GM12878 (cell line): ENCODE measurements at regions of chr1 and their contacts with region 1.

Region 1: DNA sequence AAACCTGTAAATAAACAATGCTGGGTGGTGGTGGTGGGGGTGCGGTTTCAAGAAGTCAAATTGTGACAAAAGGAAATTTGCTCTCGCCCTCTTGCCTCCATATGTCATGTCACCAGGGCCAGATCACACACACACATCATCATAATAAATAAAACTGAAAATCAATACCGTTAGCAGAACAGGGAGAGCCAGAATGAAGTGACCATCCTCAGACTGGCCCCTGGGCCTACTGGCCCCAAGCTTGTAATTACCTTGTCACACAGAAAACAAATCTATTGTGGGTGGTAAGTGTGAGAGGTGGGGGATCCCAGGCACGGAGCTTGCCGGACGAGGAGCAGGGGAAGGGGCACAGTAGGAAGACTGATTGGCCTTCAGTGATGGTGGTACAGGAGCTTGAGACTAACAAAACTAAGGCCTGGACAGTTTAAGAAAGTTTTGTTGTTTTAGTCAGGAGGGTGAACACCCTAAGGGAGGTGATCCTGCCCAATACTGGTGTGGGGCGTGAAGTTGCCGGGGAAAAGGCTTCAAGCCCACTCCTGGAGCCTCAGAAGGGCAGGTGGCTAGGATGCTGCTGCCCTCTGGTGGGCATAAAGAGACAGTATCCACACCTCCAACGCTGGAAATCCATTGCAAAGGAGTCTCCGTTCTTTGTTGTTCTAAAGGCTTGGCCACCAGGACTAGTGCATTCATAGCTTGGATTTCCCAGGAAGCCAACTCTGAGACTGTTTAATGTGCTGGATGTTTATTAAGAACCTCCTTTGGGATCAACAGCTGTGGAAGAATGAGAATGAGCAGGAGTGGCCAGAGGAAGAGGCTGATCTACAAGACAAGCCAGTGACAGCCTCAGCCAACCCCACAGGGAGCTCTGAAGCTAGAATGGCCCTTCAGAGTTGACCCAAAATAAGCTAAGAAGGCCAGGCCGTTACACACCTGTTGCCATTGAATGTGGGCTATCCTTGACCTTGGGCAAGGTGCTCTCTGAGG is 8.1 kb upstream of the C1orf216 start:
- DNase-seq: no peak
- ATAC-seq: peak; percentile 94
- H3K4me3 ChIP-seq: no peak overlapping the region
- H3K27ac ChIP-seq: no peak overlapping the region
- H3K4me1 ChIP-seq: no peaks in the 10 kb centered on the region
- H3K27me3 ChIP-seq: no peaks in the 10 kb centered on the region
- CTCF ChIP-seq: peak; percentile 81 to 85 (median 84)
- EP300 ChIP-seq: no peak
- POLR2A ChIP-seq: no peak
- RAD21 ChIP-seq: peak; percentile 77

Region 2: DNA sequence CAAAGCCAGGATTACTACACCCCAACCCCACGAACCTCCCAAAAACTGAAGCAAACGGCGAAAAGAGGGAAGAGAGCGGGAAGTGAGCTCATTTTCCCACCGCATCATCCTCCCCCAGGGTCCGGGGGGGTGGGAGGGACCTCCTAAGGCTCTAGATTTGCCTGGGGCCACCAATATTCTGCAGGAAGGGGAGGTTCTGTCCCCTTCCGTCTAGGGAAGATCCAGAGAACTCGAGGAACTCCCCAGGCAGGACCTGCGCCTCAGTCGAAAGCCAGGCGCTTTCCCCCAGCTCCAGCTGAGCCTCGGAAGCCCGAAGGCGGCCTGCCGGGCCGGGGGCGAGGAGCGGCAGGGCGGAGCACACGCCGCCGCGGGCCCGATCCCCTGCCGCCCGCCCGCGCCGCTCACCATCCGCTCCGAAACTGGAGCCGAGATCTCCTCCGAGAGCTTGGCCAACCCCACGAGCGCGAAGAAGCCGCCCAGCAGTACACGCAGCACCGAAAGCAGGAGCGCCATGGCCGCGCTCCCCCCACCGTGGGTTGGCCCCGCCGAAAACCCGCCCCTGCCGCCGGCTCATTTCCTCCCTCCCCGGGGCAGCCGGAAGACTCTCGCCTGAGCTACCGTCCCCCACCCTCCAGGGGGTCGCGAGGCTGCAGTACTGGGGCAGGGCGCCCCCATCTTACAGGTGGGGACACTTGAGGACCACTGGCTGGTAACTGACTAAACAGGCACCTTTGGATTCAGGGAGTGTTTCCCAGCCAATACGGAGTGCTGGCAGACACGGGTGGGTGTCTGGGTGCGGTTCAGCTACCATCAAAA is 741.7 kb before region 1 on chr1 and contains the start of gene TMEM35B:
- CTCF ChIA-PET with region 1: no interaction called
- POLR2A ChIA-PET with region 1: no interaction called
- RAD21 ChIA-PET with region 1: no interaction called
- SMC1A ChIA-PET with region 1: no interaction called
- in situ Hi-C with region 1: no loop called
- intact Hi-C with region 1: no loop called
- DNase-seq: no peak
- ATAC-seq: peak; percentile 92
- H3K4me3 ChIP-seq: peak within 1 kb of the TSS; percentile 97
- H3K27ac ChIP-seq: peak within 1 kb of the TSS; percentile 88
- H3K4me1 ChIP-seq: peaks cover 9% of the 10 kb centered on the region
- H3K27me3 ChIP-seq: no peaks in the 10 kb centered on the region
- CTCF ChIP-seq: no peak; a peak in 1 of 6 replicates
- EP300 ChIP-seq: 0 out of 4 replicates have a peak, but pooled peaks of 1 of the 2 experiments have one; percentile 22
- POLR2A ChIP-seq: peak; percentile 97
- RAD21 ChIP-seq: no peak
- polyA plus RNA-seq, gene TMEM35B: 118 to 138 TPM

Region 3: GRCh38 chr1:35398739-35399138 is 328.0 kb before region 1 on chr1:
- CTCF ChIA-PET with region 1: no interaction called
- POLR2A ChIA-PET with region 1: no interaction called
- RAD21 ChIA-PET with region 1: no interaction called
- SMC1A ChIA-PET with region 1: no interaction called
- in situ Hi-C with region 1: no loop called
- intact Hi-C with region 1: no loop called
- DNase-seq: no peak
- ATAC-seq: no peak
- H3K4me3 ChIP-seq: no peak overlapping the region
- H3K27ac ChIP-seq: no peak overlapping the region
- H3K4me1 ChIP-seq: no peaks in the 10 kb centered on the region
- H3K27me3 ChIP-seq: no peaks in the 10 kb centered on the region
- CTCF ChIP-seq: no peak
- EP300 ChIP-seq: no peak
- POLR2A ChIP-seq: no peak
- RAD21 ChIP-seq: no peak

Region 4: GRCh38 chr1:35519432-35519831 is 207.3 kb before region 1 on chr1:
- CTCF ChIA-PET with region 1: no interaction called
- POLR2A ChIA-PET with region 1: no interaction called
- RAD21 ChIA-PET with region 1: no interaction called
- SMC1A ChIA-PET with region 1: no interaction called
- in situ Hi-C with region 1: no loop called
- intact Hi-C with region 1: no loop called
- DNase-seq: no peak
- ATAC-seq: no peak
- H3K4me3 ChIP-seq: no peak overlapping the region
- H3K27ac ChIP-seq: no peak overlapping the region
- H3K4me1 ChIP-seq: no peaks in the 10 kb centered on the region
- H3K27me3 ChIP-seq: no peaks in the 10 kb centered on the region
- CTCF ChIP-seq: no peak
- EP300 ChIP-seq: no peak
- POLR2A ChIP-seq: no peak
- RAD21 ChIP-seq: no peak

Region 5: GRCh38 chr1:35629051-35629450 is 97.7 kb before region 1 on chr1:
- CTCF ChIA-PET with region 1: interaction called, 3 read pairs
- POLR2A ChIA-PET with region 1: no interaction called
- RAD21 ChIA-PET with region 1: no interaction called
- SMC1A ChIA-PET with region 1: interaction called, 4 read pairs
- in situ Hi-C with region 1: loop called (anchors 5 kb)
- intact Hi-C with region 1: no loop called
- DNase-seq: no peak
- ATAC-seq: no peak
- H3K4me3 ChIP-seq: no peak overlapping the region
- H3K27ac ChIP-seq: no peak overlapping the region
- H3K4me1 ChIP-seq: no peaks in the 10 kb centered on the region
- H3K27me3 ChIP-seq: no peaks in the 10 kb centered on the region
- CTCF ChIP-seq: no peak
- EP300 ChIP-seq: no peak
- POLR2A ChIP-seq: no peak
- RAD21 ChIP-seq: no peak

Region 6: GRCh38 chr1:35715568-35716002 is 11.2 kb before region 1 on chr1:
- CTCF ChIA-PET with region 1: interaction called, 109 read pairs
- POLR2A ChIA-PET with region 1: interaction called, 7 read pairs
- RAD21 ChIA-PET with region 1: interaction called, 4 read pairs
- SMC1A ChIA-PET with region 1: interaction called, 12 read pairs
- in situ Hi-C with region 1: no loop called
- intact Hi-C with region 1: no loop called
- DNase-seq: peak; percentile 42
- ATAC-seq: peak; percentile 80
- H3K4me3 ChIP-seq: no peak overlapping the region
- H3K27ac ChIP-seq: no peak overlapping the region
- H3K4me1 ChIP-seq: peaks cover 5% of the 10 kb centered on the region
- H3K27me3 ChIP-seq: no peaks in the 10 kb centered on the region
- CTCF ChIP-seq: peak; percentile 88 to 92 (median 92); a peak in 5 of 6 replicates
- EP300 ChIP-seq: no peak
- POLR2A ChIP-seq: no peak
- RAD21 ChIP-seq: peak; percentile 82

Region 7: DNA sequence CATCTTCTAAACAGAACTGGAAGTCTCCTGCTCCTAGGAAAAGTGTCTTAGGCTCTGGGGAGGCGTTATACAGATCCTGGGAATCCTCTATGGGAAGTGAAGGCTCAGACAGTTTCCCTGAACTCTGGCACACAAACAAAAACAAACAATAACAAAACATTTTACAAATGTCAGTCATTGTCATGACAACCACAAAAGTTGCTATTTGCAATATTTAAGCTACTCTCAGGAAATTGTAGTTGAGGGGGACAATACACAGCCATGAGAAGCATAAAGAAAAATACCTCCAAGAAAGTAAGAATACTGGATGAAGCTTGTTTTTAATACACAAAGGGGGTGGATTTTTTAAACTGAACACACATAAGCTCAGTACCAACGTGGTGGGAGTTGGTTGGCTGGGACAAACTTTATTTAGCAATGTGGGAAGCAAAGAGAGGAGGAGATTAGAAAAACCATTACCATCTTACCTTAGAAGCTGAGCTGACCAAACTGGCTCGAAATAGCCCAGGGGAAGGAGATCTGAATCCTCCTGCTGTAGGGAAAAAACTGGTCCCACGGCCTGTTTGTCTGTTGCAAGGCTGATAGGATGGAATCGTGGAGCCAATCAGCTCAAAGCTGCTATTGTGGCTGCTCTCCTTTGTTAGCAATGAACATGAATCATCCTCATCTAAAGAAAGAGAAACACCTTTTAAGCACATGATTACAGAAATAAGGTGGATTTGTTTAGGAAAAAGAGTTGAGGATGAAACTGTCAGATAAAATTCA is 21.4 kb after region 1 on chr1:
- CTCF ChIA-PET with region 1: interaction called, 20 read pairs
- POLR2A ChIA-PET with region 1: no interaction called
- RAD21 ChIA-PET with region 1: no interaction called
- SMC1A ChIA-PET with region 1: interaction called, 5 read pairs
- in situ Hi-C with region 1: no loop called
- intact Hi-C with region 1: no loop called
- DNase-seq: no peak
- ATAC-seq: no peak
- H3K4me3 ChIP-seq: no peak overlapping the region
- H3K27ac ChIP-seq: no peak overlapping the region
- H3K4me1 ChIP-seq: no peaks in the 10 kb centered on the region
- H3K27me3 ChIP-seq: no peaks in the 10 kb centered on the region
- CTCF ChIP-seq: no peak
- EP300 ChIP-seq: no peak
- POLR2A ChIP-seq: no peak
- RAD21 ChIP-seq: no peak

Region 8: GRCh38 chr1:35769759-35770446 is 43.2 kb after region 1 on chr1 and contains the start of gene CLSPN:
- CTCF ChIA-PET with region 1: interaction called, 58 read pairs
- POLR2A ChIA-PET with region 1: interaction called, 3 read pairs
- RAD21 ChIA-PET with region 1: interaction called, 8 read pairs
- SMC1A ChIA-PET with region 1: interaction called, 15 read pairs
- in situ Hi-C with region 1: no loop called
- intact Hi-C with region 1: no loop called
- DNase-seq: peak; percentile 86
- ATAC-seq: peak; percentile 95
- H3K4me3 ChIP-seq: peak within 1 kb of the TSS; percentile 78
- H3K27ac ChIP-seq: peak within 1 kb of the TSS; percentile 91
- H3K4me1 ChIP-seq: no peaks in the 10 kb centered on the region
- H3K27me3 ChIP-seq: no peaks in the 10 kb centered on the region
- CTCF ChIP-seq: no peak
- EP300 ChIP-seq: no peak
- POLR2A ChIP-seq: peak; percentile 91
- RAD21 ChIP-seq: no peak
- polyA plus RNA-seq, gene CLSPN: 13.9 to 16.6 TPM

Region 9: GRCh38 chr1:35857830-35858229 is 131.1 kb after region 1 on chr1:
- CTCF ChIA-PET with region 1: no interaction called
- POLR2A ChIA-PET with region 1: no interaction called
- RAD21 ChIA-PET with region 1: no interaction called
- SMC1A ChIA-PET with region 1: no interaction called
- in situ Hi-C with region 1: no loop called
- intact Hi-C with region 1: no loop called
- DNase-seq: no peak
- ATAC-seq: peak; percentile 49; the same call in 1 of the 3 replicates
- H3K4me3 ChIP-seq: no peak overlapping the region
- H3K27ac ChIP-seq: no peak overlapping the region
- H3K4me1 ChIP-seq: no peaks in the 10 kb centered on the region
- H3K27me3 ChIP-seq: no peaks in the 10 kb centered on the region
- CTCF ChIP-seq: peak; percentile 25 to 48 (median 31); a peak in 4 of 6 replicates
- EP300 ChIP-seq: no peak
- POLR2A ChIP-seq: no peak
- RAD21 ChIP-seq: peak; percentile 36; the same call in 1 of the 2 replicates